Activated T-helper 1 cell treated with anti-CD3 and anti-CD28 coated beads, Interleukin-12 subunit alpha, Interleukin-12 subunit beta, Interleukin-2, Interleukin-4 antibody, amounts not matched to agents 30 ng/mL and 10 ng/mL and 1 ng/mL, durations not matched to agents 14 hours and 24 hours and 36 hours (primary cell): ENCODE measurements at regions of chr2 and their contacts with region 1.

Region 1: DNA sequence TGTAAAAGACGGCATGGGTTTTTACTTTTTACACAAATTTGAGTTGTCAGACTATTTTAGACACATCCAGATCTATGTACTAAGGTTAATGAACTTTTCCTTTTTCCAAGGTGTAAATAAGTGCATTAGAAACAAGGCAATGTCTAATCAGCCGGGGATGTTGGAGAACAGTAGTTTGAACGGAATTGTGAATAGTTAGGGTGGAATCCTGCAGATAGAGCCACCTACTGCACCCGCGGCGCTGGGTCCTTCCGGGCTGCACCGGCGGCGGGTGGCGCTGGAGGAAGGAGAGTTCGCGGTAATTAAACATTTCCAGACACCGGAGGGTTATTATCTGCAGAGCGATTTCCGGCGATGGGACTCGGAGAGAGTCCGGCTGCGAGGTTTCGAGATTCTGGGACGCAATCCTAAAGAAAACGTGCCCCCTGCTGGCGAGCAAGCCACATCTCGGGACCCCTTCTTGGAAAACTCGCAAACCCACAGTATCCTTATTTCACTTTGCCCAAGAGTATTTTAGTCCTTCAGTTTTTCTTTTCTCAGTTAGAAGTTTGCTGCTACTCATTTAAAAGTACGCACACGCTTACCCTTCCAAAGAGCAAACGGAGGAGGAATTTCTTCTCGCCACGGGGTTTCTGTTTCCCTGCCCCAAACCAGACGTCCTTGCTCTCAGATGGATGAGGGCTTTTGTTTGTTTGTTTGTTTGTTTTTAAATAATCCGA is 4.5 kb upstream of the OSR1 start:
- DNase-seq: no peak
- H3K4me3 Mint-ChIP-seq: peak overlapping the region; percentile 90
- H3K27ac Mint-ChIP-seq: no peak overlapping the region
- H3K4me1 Mint-ChIP-seq: peaks cover 24% of the 10 kb centered on the region
- H3K27me3 Mint-ChIP-seq: peaks cover 94% of the 10 kb centered on the region

Region 2: DNA sequence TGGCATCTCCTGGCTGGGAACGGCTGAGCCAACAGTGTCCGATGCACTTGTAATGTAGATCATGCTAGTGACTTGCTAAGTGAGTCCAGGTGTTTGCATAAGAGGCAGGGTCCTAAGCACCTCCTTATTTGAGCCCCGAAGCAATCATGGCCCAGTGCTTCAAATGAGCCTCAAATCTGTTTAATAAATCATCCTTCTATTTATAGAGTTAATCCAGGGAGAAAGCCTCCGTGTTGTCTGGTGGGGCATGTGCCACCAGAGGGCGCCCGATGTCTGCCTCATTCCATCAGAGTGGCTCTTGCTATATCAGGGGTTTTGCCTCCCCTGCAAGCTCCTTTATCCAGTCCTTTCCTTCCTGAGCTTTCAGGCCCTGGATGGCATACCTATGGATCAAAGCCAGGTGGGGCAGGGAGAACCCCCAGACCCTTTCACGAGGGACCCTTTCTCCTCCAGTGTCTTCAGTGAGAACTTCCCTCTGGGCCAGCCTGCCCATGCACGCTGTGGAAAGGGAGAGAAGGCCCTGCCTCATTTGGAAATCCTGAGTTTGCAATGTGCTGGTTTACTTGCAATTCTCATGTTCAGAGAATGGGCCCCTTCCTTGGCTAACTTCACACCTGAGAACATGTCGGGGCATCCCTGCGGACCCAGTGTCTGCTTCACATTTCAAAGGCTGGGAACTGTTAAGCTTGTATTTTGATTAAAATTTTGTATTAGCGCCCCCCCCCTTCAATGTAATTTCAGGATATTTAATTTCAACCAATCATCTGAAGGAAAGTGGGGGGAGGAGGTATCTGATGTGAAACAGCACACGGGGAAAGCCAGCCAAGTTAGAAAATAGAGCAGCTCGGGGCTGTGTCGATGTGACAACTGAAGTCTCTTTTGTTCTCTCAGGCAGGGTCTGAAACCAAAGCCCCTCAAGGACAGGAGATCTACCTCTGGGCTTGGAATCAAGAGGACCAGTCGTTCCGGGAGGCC is 842.2 kb before region 1 on chr2:
- intact Hi-C with region 1: loop called (anchors 5 kb)
- DNase-seq: peak; percentile 46
- H3K4me3 Mint-ChIP-seq: no peak overlapping the region
- H3K27ac Mint-ChIP-seq: no peak overlapping the region
- H3K4me1 Mint-ChIP-seq: no peaks in the 10 kb centered on the region
- H3K27me3 Mint-ChIP-seq: peaks cover 8% of the 10 kb centered on the region

Region 3: DNA sequence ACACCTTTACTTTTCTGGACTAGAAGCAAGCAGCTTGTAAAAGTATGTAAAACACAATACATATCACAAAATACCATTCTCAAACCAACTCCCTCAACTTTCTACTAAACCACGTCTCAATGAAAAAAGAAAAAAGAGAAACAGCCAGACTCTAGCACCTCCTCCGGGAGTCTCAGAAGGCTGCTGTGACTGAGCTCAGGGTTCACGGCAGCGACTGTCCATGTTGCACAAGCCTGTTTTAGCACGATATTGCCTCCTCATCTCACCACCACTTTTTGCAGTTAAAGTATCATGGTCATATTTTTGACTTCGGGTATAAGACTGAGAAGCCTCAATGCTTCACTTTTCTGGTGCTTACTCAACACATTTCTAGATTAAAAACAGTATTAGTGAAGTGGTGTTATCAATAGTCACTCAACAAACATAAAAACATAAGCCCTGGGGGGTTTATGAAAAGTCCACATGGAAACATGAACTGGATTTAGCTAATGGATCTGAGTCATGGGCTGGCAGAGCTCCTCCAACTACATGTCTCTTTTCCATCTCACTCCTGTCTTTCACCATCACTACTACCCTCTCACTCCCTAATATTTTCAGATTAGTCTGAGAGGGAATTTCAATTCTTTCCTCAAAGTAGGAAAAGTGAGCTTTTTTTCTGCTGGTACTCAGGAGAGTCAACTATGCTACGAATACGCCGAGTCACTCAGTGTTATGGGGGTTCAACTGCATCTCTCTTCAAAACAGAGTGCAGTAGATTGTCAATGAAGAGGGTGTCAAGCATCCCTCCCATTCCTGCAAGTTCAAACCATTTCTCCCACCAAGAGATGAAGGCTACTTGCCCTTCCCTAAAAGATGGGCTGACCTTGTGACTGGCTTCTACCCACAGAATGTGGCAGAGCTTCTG is 118.2 kb before region 1 on chr2:
- intact Hi-C with region 1: no loop called
- DNase-seq: no peak
- H3K4me3 Mint-ChIP-seq: no peak overlapping the region
- H3K27ac Mint-ChIP-seq: no peak overlapping the region
- H3K4me1 Mint-ChIP-seq: no peaks in the 10 kb centered on the region
- H3K27me3 Mint-ChIP-seq: no peaks in the 10 kb centered on the region